HepG2 (cell line): ENCODE measurements at regions of chr10 and their contacts with region 1.

Region 1: DNA sequence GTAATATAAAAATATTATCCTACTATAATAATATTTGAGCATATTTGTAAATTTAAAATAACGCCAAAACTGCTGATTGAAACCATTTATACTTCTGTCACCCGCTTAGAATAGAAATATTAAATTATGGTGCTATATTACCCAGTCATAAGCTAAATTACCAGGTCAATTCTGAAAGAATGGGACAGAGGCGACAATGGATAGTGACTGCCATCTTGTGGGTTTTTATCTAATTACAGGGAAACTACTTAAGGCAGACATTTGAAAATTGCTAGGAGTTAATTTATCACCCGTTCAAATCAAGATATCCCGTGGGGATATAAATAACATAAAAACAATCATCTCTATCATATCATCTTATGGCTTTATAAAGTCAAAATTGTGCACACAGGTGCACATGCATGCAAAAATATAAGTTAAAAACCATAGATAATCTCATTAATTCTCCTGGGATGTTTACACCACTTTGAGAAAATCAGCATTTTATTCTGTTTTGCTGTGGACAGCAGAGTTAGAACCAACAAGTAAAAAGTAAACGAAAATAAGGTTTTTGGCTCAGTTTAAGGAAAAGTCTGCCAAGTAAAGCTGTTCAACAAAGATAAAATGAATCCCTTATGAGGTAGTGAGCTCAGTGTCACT is 41.3 kb upstream of the HPSE2 start:
- DNase-seq: peak; percentile 17
- ATAC-seq: no peak
- H3K4me3 ChIP-seq: no peak overlapping the region
- H3K27ac ChIP-seq: no peak overlapping the region
- H3K4me1 ChIP-seq: peaks cover 6% of the 10 kb centered on the region; the same call in 1 of the 2 replicates
- H3K27me3 ChIP-seq: peaks cover 0 to 3% of the 10 kb centered on the region in 2 experiments; a peak in 1 of 5 replicates
- CTCF ChIP-seq: peak; percentile 60
- EP300 ChIP-seq: no peak
- POLR2A ChIP-seq: no peak
- RAD21 ChIP-seq: peak; percentile 36; the same call in 1 of the 2 replicates

Region 2: DNA sequence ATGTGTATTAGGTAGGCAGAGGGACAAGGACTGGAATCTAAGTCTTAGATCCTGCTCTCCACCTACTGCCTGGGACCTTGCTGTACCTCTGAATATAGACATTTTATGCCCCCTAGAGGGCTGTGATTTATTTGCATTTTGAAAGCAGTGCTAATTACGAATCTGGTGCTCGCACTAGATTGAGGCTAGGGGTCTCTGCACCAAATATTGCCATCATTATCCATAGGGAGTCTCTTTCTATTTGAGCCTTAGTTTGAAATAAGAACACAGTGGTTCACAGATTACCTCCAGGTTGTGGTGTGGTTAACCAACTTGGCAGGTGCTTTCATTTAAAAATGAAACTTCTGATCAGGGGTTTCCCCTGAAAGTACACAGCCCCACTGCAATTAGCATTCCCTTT is 94.0 kb after region 1 on chr10:
- CTCF ChIA-PET with region 1: no interaction called
- POLR2A ChIA-PET with region 1: no interaction called
- in situ Hi-C with region 1: no loop called
- intact Hi-C with region 1: loop called (anchors 1 kb)
- DNase-seq: peak; percentile 59
- ATAC-seq: peak; percentile 89
- H3K4me3 ChIP-seq: no peak overlapping the region
- H3K27ac ChIP-seq: no peak overlapping the region
- H3K4me1 ChIP-seq: peaks cover 34% of the 10 kb centered on the region; the same call in 1 of the 2 replicates
- H3K27me3 ChIP-seq: no peaks in the 10 kb centered on the region
- CTCF ChIP-seq: peak; percentile 68
- EP300 ChIP-seq: no peak
- POLR2A ChIP-seq: no peak
- RAD21 ChIP-seq: 0 out of 2 replicates have a peak, but pooled peaks have one; percentile 34